ENCODE measurements at regions of chr11 and their contacts with region 1.

Region 1: GRCh38 chr11:3854977-3855807 is at the start of gene STIM1:
- DNase-seq: peak; percentile 97
- ATAC-seq: peak; percentile 79
- H3K4me3 Mint-ChIP-seq: peak within 1 kb of the TSS; percentile 94
- H3K27ac Mint-ChIP-seq: peak within 1 kb of the TSS; percentile 85; the same call in 1 of the 2 replicates
- H3K4me1 Mint-ChIP-seq: peaks cover 43% of the 10 kb centered on the region
- H3K27me3 Mint-ChIP-seq: peaks cover 26% of the 10 kb centered on the region
- CTCF ChIP-seq: peak; percentile 89
- total RNA-seq, gene STIM1: 17.0 to 18.0 TPM (median 17.4 TPM) in 3 replicates

Region 2: GRCh38 chr11:3782963-3783362 is 72.2 kb before region 1 on chr11:
- CTCF ChIA-PET with region 1: no interaction called
- POLR2A ChIA-PET with region 1: no interaction called
- DNase-seq: no peak
- ATAC-seq: peak; percentile 68
- H3K4me3 Mint-ChIP-seq: no peak overlapping the region
- H3K27ac Mint-ChIP-seq: peak overlapping the region; percentile 84
- H3K4me1 Mint-ChIP-seq: peaks cover 9% of the 10 kb centered on the region
- H3K27me3 Mint-ChIP-seq: no peaks in the 10 kb centered on the region
- CTCF ChIP-seq: no peak

Region 3: GRCh38 chr11:3824714-3825472 is 30.3 kb before region 1 on chr11:
- CTCF ChIA-PET with region 1: interaction called, 24 read pairs
- POLR2A ChIA-PET with region 1: no interaction called
- DNase-seq: peak; percentile 94
- ATAC-seq: peak; percentile 92
- H3K4me3 Mint-ChIP-seq: no peak overlapping the region
- H3K27ac Mint-ChIP-seq: peak overlapping the region; percentile 26
- H3K4me1 Mint-ChIP-seq: peaks cover 41% of the 10 kb centered on the region
- H3K27me3 Mint-ChIP-seq: no peaks in the 10 kb centered on the region
- CTCF ChIP-seq: peak; percentile 87

Region 4: DNA sequence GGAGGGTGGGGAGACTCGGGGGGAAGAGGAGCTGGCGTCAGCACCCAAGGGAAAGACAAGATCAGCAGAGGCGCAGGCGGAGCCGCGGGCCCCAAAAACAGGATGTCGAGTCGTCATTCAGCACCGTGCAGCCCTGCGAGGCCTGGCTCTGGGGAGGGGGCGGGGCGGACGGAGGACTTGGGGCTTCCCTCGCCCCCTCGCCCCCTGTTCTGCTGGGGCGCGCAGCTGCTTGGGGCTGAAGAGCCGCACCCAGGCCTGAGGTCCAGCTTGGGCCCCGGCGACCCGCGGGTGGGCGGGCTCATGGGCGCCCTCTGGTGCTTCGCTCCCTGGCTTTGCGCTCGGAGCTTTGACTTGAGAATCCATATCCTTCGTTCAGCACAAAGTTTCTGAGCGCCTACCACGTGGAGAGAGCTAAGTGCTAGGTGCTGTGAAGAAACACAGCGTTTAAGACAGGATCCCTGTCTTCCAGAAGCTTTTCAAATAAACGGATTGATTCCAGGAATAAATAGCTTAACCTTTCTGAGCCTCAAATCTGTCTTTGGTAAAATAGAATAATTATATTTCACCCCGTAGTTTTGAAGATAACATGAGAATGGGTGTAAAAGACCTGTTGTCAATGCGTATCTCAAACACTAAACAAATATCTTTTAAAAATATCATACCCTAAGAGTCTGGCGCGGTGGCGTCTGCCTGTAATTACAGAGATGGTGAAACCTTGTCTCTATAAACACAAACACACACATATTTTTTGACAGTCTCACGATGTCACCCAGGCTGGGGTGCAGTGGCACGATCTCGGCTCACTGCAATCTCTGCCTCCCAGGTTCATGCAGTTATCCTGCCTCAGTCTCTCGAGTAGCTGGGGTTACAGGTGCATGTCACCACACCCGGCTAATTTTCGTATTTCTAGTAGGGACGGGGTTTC is 13.5 kb before region 1 on chr11:
- CTCF ChIA-PET with region 1: interaction called, 165 read pairs
- POLR2A ChIA-PET with region 1: interaction called, 17 read pairs
- DNase-seq: peak; percentile 84
- ATAC-seq: peak; percentile 66
- H3K4me3 Mint-ChIP-seq: peak overlapping the region; percentile 72
- H3K27ac Mint-ChIP-seq: no peak overlapping the region
- H3K4me1 Mint-ChIP-seq: peaks cover 36% of the 10 kb centered on the region
- H3K27me3 Mint-ChIP-seq: peaks cover 9% of the 10 kb centered on the region
- CTCF ChIP-seq: peak; percentile 58

Region 5: DNA sequence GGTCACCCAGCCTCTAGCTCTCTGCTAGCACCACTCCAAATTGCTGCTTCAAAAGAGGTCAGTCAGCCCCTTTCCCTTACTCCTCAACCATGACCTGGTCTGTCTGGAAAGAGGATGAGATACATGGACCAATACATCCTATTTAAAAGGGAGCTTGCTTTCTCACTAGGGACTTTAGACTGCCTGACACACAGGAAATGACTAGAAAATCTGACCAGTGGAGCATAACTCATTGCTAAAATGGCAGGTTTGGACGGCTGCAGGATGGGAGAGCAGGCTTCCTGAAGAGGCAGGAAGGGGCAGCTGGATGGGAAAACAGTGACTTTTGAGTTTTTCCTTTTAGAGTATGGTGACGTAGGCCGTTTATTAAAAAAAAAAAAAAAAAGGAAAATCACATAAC is 25.5 kb after region 1 on chr11:
- CTCF ChIA-PET with region 1: interaction called, 38 read pairs
- POLR2A ChIA-PET with region 1: no interaction called
- DNase-seq: no peak
- ATAC-seq: no peak
- H3K4me3 Mint-ChIP-seq: no peak overlapping the region
- H3K27ac Mint-ChIP-seq: no peak overlapping the region
- H3K4me1 Mint-ChIP-seq: peaks cover 16% of the 10 kb centered on the region
- H3K27me3 Mint-ChIP-seq: no peaks in the 10 kb centered on the region
- CTCF ChIP-seq: no peak

Region 6: DNA sequence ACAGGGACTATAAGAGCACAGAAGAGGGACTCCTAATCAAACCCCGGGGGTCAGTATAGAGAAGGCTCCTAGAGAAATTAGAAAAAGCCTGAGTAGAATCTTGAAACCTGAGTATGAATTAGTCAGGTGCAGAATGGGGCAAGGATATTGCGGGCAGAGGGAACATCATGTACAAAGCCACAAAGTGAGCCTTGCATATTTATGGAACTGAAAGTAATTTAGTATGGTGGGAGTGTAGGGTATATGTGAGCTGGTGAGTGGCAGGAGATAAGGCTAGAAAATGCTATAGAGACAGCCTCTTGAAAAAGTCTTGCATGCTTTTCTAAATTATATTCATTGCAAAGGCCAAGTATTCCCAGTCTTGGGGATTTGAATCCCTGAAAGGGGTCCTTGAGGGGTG is 93.9 kb after region 1 on chr11:
- CTCF ChIA-PET with region 1: interaction called, 23 read pairs
- POLR2A ChIA-PET with region 1: no interaction called
- DNase-seq: no peak
- ATAC-seq: no peak
- H3K4me3 Mint-ChIP-seq: no peak overlapping the region
- H3K27ac Mint-ChIP-seq: no peak overlapping the region
- H3K4me1 Mint-ChIP-seq: peaks cover 7% of the 10 kb centered on the region
- H3K27me3 Mint-ChIP-seq: no peaks in the 10 kb centered on the region
- CTCF ChIP-seq: no peak

Region 7: DNA sequence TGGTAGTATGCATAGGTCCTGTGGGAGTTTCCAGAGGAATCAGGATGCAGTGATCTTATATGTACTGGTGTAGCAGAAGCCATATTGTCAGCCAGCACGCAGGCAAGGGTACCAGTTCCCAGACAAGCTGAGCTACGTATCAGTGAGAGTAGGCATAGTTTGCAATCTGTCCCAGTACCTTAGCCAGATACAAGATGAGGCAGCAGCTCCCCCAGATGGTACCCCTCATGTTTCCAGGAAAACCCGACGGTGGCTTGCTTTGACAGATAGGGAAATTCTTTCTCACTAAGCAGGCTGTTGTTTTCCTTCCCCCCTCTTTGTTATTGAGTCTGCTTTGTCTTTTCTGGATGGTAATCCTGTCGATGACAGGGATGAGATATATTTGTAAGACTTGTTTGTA is 129.7 kb after region 1 on chr11:
- CTCF ChIA-PET with region 1: interaction called, 28 read pairs
- POLR2A ChIA-PET with region 1: no interaction called
- DNase-seq: peak; percentile 28
- ATAC-seq: peak; percentile 71
- H3K4me3 Mint-ChIP-seq: no peak overlapping the region
- H3K27ac Mint-ChIP-seq: no peak overlapping the region
- H3K4me1 Mint-ChIP-seq: peaks cover 7% of the 10 kb centered on the region
- H3K27me3 Mint-ChIP-seq: peaks cover 19% of the 10 kb centered on the region
- CTCF ChIP-seq: no peak

Region 8: DNA sequence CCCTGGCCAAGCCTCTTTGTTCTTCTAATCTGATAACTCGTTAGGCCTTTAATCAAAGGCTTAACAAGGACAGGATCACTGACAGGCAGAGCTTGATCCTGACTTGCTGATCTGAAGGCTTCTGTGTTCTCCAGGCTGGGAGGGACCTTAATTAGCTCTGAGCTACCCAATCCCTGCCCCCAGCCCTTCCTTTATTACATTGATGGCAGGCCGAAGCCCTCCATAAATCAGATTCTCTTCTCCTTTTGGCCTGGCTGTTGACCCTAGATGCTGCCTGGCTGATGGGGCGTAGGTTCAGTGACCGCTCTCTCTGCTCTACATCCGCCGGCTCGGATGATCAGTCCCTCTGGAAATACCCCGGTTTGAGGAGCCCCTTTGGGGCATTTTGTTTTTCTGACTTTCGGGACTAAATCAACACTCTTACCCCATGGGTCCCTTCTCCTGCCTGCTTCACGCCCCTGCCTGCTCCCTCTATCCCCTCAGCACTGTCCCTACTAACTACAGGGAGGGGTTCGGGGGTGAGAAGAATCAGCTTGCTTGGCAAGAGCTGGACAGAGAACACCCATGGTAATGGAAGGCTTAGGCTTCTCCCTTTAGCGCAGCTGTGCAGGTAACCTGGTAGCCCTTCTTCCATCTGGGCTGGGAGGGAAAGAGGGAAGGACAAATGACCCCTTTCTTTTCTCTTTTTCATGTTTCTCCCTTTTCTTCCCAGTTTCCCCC is 229.4 kb after region 1 on chr11:
- CTCF ChIA-PET with region 1: interaction called, 14 read pairs
- POLR2A ChIA-PET with region 1: no interaction called
- DNase-seq: no peak
- ATAC-seq: no peak
- H3K4me3 Mint-ChIP-seq: no peak overlapping the region
- H3K27ac Mint-ChIP-seq: no peak overlapping the region
- H3K4me1 Mint-ChIP-seq: peaks cover 12% of the 10 kb centered on the region
- H3K27me3 Mint-ChIP-seq: no peaks in the 10 kb centered on the region
- CTCF ChIP-seq: no peak

Measured in WTC11 (cell line).